ENCODE measurements at regions of chr15 and their contacts with region 1.

Region 1: GRCh38 chr15:93693601-93694000 is 537.8 kb upstream of the MCTP2 start:
- DNase-seq: no peak

Region 2: DNA sequence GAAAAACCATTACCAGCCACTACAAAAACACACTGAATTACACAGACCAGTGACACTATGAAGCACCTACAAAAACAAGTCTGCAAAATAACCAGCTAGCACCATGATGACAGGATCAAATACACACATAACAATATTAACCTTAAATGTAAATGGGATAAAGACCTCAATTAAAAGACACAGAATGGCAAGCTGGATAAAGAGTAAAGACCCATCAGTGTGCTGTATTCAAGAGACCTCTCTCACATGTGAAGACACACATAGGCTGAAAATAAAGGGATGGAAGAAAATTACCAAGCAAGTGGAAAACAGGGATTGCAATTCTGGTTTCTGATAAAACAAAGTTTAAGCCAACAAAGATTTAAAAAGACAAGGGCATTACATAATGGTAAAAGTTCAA is 55.1 kb after region 1 on chr15:
- intact Hi-C with region 1: loop called (anchors 2 kb)
- DNase-seq: no peak